Calu3 (cell line): ENCODE measurements at regions of chr3 and their contacts with region 1.

Region 1: GRCh38 chr3:27560484-27561056 is 76.4 kb upstream of the SLC4A7 start:
- DNase-seq: no peak
- H3K4me3 Mint-ChIP-seq: no peak overlapping the region
- H3K27ac Mint-ChIP-seq: no peak overlapping the region
- H3K4me1 Mint-ChIP-seq: no peaks in the 10 kb centered on the region
- H3K27me3 Mint-ChIP-seq: no peaks in the 10 kb centered on the region
- CTCF ChIP-seq: no peak

Region 2: DNA sequence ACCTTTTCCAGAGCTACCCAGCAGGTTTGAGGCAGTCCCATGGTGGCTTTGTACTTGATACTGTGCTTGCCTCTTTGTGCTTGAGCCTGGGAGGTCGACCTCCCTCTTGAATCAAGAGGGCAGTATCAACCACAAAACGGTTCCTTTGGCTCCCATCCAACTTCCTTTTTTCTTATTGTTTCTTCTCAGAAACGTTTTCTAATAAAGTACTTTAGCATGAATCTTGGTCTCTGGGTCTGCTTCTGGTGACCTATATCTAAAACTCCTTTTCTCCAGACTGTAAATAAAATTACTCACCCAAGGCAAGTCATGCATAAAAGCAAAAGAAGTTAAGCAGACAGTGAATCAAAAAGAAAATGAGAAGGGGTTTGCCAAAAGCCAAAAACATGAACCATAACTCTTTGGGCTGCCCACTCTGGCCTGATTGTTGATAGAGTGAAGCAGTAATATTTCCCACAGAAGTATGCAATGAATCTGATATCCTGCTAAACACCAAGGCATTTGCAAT is 35.8 kb after region 1 on chr3:
- CTCF ChIA-PET with region 1: no interaction called
- intact Hi-C with region 1: no loop called
- DNase-seq: peak; percentile 11
- H3K4me3 Mint-ChIP-seq: no peak overlapping the region
- H3K27ac Mint-ChIP-seq: no peak overlapping the region
- H3K4me1 Mint-ChIP-seq: peaks cover 16% of the 10 kb centered on the region
- H3K27me3 Mint-ChIP-seq: no peaks in the 10 kb centered on the region
- CTCF ChIP-seq: no peak

Region 3: GRCh38 chr3:28022916-28023315 is 462.3 kb after region 1 on chr3:
- CTCF ChIA-PET with region 1: interaction called, 11 read pairs
- intact Hi-C with region 1: no loop called
- DNase-seq: peak; percentile 27
- H3K4me3 Mint-ChIP-seq: no peak overlapping the region
- H3K27ac Mint-ChIP-seq: peak overlapping the region; percentile 6
- H3K4me1 Mint-ChIP-seq: peaks cover 14% of the 10 kb centered on the region
- H3K27me3 Mint-ChIP-seq: no peaks in the 10 kb centered on the region
- CTCF ChIP-seq: no peak

Region 4: DNA sequence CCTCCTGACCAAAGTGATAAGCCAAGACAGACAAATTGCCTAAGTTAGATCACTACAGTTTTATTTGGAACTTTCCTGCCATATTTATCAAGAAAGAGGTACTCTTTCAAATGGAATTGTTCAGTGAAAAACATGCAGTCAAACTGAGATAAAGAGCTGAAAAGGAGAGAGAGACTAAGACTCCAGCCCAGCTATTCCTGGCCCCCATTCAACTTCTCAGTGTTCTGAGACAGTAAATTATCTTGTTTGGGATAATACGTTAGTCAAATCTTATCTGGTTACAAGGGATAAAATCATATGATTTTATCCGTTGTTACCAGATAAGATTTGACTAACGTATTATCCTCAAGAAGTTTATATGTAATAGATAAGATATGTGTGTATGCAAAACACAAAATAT is 613.3 kb after region 1 on chr3:
- CTCF ChIA-PET with region 1: no interaction called
- intact Hi-C with region 1: no loop called
- DNase-seq: no peak
- H3K4me3 Mint-ChIP-seq: no peak overlapping the region
- H3K27ac Mint-ChIP-seq: no peak overlapping the region
- H3K4me1 Mint-ChIP-seq: no peaks in the 10 kb centered on the region
- H3K27me3 Mint-ChIP-seq: no peaks in the 10 kb centered on the region
- CTCF ChIP-seq: no peak